ENCODE measurements at regions of chr1 and their contacts with region 1.

Region 1: GRCh38 chr1:226121587-226122400 is 59.3 kb downstream of the H3-3A start:
- DNase-seq: no peak
- ATAC-seq: peak; percentile 72
- H3K4me3 ChIP-seq: peak overlapping the region; percentile 51 to 59
- H3K27ac ChIP-seq: peak overlapping the region; percentile 95
- H3K4me1 ChIP-seq: peaks cover 31 to 47% of the 10 kb centered on the region in 2 experiments
- H3K27me3 ChIP-seq: no peaks in the 10 kb centered on the region
- CTCF ChIP-seq: peak in 2 of 3 experiments; percentile 56 to 57; a peak in 4 of 6 replicates
- POLR2A ChIP-seq: no peak
- RAD21 ChIP-seq: no peak

Region 2: GRCh38 chr1:225809842-225810578 is 311.8 kb before region 1 on chr1 and contains the start of gene EPHX1:
- CTCF ChIA-PET with region 1: no interaction called
- POLR2A ChIA-PET with region 1: no interaction called
- RAD21 ChIA-PET with region 1: no interaction called
- intact Hi-C with region 1: no loop called
- DNase-seq: peak; percentile 71
- ATAC-seq: peak; percentile 98
- H3K4me3 ChIP-seq: peak within 1 kb of the TSS; percentile 66 to 67
- H3K27ac ChIP-seq: peak within 1 kb of the TSS; percentile 69
- H3K4me1 ChIP-seq: peaks cover 13 to 25% of the 10 kb centered on the region in 2 experiments
- H3K27me3 ChIP-seq: no peaks in the 10 kb centered on the region
- CTCF ChIP-seq: peak in 1 of 3 experiments; percentile 32; a peak in 1 of 6 replicates
- POLR2A ChIP-seq: peak; percentile 94
- RAD21 ChIP-seq: peak; percentile 11; the same call in 1 of the 2 replicates
- total RNA-seq, gene EPHX1: 44.6 TPM

Region 3: DNA sequence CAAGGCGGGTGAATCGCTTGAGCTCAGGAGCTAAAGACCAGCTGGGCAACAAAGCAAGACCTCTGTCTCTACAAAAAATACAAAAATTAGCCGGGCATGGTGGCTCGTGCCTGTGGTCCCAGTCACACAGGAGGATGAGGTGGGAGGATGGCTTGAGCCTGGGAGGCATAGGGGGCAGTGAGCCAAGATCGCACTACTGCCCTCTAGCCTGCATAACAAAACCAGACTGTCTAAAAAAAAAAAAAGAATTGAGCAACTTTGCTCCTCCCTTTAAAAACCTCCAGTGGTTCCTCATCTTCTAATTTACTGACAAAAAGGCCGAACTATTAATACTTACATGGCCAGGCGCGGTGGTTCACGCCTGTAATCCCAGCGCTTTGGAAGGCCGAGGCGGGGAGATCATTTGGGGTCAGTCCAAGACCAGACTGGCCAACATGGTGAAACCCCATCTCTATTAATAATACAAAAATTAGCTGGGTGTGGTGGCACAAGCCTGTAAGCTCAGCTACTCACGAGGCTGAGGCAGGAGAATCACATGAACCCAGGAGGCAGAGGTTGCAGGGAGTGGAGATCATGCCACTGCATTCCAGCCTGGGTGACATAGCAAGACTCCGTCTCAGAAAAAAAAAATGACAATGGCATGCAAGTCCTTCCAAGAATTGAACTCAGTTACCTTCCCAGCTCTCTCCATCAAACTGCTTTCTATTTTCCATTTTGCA is 60.4 kb after region 1 on chr1:
- CTCF ChIA-PET with region 1: interaction called, 20 read pairs
- POLR2A ChIA-PET with region 1: no interaction called
- RAD21 ChIA-PET with region 1: no interaction called
- intact Hi-C with region 1: loop called (anchors 5 kb)
- DNase-seq: peak; percentile 39
- ATAC-seq: peak; percentile 43
- H3K4me3 ChIP-seq: no peak overlapping the region
- H3K27ac ChIP-seq: 0 out of 2 replicates have a peak overlapping the region, but pooled peaks have one; percentile 11
- H3K4me1 ChIP-seq: peaks cover 16 to 38% of the 10 kb centered on the region in 2 experiments
- H3K27me3 ChIP-seq: no peaks in the 10 kb centered on the region
- CTCF ChIP-seq: peak; percentile 31 to 54 (median 49); a peak in 5 of 6 replicates
- POLR2A ChIP-seq: no peak
- RAD21 ChIP-seq: no peak

Region 4: GRCh38 chr1:226195144-226195543 is 73.3 kb after region 1 on chr1:
- CTCF ChIA-PET with region 1: interaction called, 56 read pairs
- POLR2A ChIA-PET with region 1: interaction called, 6 read pairs
- RAD21 ChIA-PET with region 1: interaction called, 6 to 13 read pairs
- intact Hi-C with region 1: loop called (anchors 1 kb)
- DNase-seq: no peak
- ATAC-seq: no peak
- H3K4me3 ChIP-seq: no peak overlapping the region
- H3K27ac ChIP-seq: no peak overlapping the region
- H3K4me1 ChIP-seq: peaks cover 0 to 5% of the 10 kb centered on the region in 2 experiments; a peak in 2 of 4 replicates
- H3K27me3 ChIP-seq: no peaks in the 10 kb centered on the region
- CTCF ChIP-seq: no peak
- POLR2A ChIP-seq: no peak
- RAD21 ChIP-seq: no peak

Region 5: DNA sequence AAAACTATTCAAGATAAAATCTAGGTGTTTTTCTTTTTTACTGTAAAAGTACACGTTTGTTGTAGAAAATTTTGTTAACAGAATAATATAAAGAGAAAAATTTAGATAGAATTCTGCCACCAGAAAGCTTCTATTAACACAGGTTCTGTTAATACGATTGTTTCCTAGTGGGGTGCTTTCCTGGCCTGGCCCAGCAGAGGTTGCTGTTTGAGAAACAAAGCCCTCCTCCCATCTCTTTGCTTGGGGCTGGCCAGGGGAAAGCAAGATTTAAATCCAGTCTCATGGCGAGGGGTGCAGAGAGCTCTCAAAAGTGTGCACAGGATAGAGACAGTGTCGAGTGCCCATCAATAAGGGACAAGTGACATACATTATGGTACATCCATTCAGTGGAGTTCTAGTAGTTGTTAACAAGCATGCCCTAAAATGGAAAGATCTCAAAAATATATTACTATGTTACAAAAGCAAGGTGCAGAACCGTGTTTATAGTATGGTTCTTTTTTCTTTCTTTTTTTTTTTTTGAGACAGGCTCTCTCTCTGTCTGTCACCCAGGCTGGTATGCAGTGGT is 79.3 kb after region 1 on chr1:
- CTCF ChIA-PET with region 1: interaction called, 56 read pairs
- POLR2A ChIA-PET with region 1: interaction called, 6 read pairs
- RAD21 ChIA-PET with region 1: interaction called, 6 to 13 read pairs
- intact Hi-C with region 1: loop called (anchors 1 kb)
- DNase-seq: peak; percentile 13
- ATAC-seq: peak; percentile 69
- H3K4me3 ChIP-seq: no peak overlapping the region
- H3K27ac ChIP-seq: no peak overlapping the region
- H3K4me1 ChIP-seq: peaks cover 0 to 5% of the 10 kb centered on the region in 2 experiments; a peak in 2 of 4 replicates
- H3K27me3 ChIP-seq: no peaks in the 10 kb centered on the region
- CTCF ChIP-seq: peak; percentile 49 to 62 (median 57)
- POLR2A ChIP-seq: no peak
- RAD21 ChIP-seq: peak; percentile 75

Region 6: DNA sequence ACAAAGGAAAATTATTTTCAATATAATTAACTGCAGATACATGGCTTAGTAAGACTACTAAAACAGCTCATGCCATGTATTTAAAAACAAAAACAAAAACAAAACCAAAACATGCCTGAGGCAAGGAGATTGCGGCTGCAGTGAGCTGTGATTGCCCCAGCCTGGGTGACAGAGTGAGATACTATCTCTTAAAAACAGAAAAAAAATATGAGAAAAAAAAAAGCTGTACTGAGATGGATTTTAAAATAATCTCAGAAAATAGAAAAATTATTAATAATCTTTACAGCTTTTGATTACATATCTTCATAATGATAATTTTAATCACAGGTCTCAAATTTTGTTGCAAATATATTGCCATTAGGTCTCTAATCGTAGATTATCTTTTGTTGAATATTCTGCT is 211.2 kb after region 1 on chr1:
- CTCF ChIA-PET with region 1: interaction called, 20 read pairs
- POLR2A ChIA-PET with region 1: interaction called, 3 read pairs
- RAD21 ChIA-PET with region 1: interaction called, 3 read pairs
- intact Hi-C with region 1: loop called (anchors 1 kb)
- DNase-seq: no peak
- ATAC-seq: no peak; the same call in 1 of the 2 replicates
- H3K4me3 ChIP-seq: peak overlapping the region; percentile 16 to 45; a peak in 3 of 4 replicates
- H3K27ac ChIP-seq: no peak overlapping the region
- H3K4me1 ChIP-seq: peaks cover 3 to 7% of the 10 kb centered on the region in 2 experiments; a peak in 3 of 4 replicates
- H3K27me3 ChIP-seq: no peaks in the 10 kb centered on the region
- CTCF ChIP-seq: no peak
- POLR2A ChIP-seq: no peak
- RAD21 ChIP-seq: no peak

Region 7: DNA sequence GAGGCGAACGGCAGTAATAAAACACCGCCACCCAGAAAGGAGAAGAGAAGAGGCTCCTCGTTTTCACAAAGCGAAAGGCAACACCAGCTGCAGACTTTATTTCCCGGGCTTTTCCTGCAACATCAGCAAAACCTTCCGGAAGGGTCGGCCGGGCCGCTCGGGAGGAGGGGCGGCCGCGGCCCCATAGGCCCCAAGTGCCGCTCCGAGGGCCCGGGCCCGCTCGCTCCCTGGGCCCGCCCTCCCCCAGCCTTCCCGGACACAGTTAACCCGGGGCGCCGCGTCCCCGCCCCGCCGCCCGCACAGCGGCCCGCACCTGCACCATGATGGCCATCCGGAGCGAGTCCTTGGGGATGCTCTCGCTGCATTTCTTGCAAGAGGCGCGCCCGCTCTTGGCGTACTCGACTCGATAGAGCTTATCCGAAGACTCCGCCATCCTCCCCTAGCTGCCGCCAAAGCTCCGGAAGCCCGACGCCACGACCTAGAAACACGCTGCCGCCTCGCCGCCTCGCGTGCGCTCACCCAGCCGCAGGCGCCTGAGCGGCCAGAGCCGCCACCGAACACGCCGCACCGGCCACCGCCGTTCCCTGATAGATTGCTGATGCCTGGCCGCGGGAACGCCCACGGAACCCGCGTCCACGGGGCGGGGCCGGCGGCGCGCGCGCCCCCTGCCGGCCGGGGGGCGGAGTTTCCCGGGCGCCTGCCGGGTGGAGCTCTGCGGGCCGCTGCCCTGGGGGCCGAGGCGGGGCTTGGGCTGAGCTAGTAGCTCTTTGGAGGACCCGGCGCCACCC is 285.9 kb after region 1 on chr1 and contains the start of gene PARP1:
- CTCF ChIA-PET with region 1: interaction called, 5 read pairs
- POLR2A ChIA-PET with region 1: no interaction called
- RAD21 ChIA-PET with region 1: interaction called in 1 of 2 experiments, 3 read pairs
- intact Hi-C with region 1: loop called (anchors 5 kb)
- DNase-seq: peak; percentile 71
- ATAC-seq: peak; percentile 92
- H3K4me3 ChIP-seq: peak within 1 kb of the TSS; percentile 70 to 73
- H3K27ac ChIP-seq: peak within 1 kb of the TSS; percentile 79
- H3K4me1 ChIP-seq: peaks cover 8 to 38% of the 10 kb centered on the region in 2 experiments; a peak in 3 of 4 replicates
- H3K27me3 ChIP-seq: no peaks in the 10 kb centered on the region
- CTCF ChIP-seq: peak in 2 of 3 experiments; percentile 43 to 61; a peak in 3 of 6 replicates
- POLR2A ChIP-seq: peak; percentile 79
- RAD21 ChIP-seq: no peak
- total RNA-seq, gene PARP1: 213 TPM

Measured in HCT116 (cell line).